ENCODE measurements at regions of chr20 and their contacts with region 1.

Region 1: DNA sequence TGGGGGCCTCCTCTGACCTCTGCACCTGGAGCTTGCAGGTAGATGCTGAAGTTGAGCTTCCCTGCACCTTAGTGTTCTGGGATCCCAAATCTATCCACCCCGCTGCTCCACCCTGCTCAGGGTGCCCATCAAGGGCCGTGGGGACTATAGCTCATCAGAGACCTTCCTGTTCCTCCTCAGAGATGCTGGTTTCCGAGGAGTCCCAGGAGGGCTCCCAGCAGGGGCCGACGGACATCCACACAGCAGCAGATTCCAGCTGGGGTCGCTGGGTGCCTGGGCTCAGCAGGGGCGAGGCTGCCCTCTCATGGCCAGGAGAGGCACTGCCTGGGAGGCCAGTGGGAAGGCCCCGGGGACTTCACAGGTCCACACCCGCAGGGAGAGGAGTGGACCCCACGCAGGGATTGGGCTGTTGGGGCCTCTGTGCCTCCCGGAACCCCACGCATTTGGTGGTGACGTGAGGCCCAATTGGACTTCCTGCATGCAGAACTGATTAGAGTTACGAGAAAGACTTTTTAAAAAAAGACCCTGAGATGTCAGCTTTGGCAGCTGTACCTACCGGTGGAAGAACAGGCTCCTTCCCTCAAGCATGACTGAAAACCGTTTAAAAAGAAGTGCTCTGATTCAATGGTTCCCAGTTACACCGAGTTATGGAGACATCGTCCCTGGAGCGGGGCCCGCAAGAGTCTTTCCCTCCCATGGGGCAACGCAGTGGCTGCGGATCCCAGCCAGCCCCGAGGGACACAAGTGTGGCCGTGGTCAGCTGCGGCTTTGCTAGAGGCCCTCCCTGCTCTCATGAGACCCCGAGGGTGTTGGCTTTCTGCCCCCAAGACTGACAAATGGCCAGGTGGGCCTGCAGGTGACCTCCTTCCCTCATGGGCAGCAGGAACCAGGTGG is 25.3 kb upstream of the SLCO4A1 start:
- DNase-seq: peak; percentile 87
- H3K27ac ChIP-seq: peak overlapping the region; percentile 71
- CTCF ChIP-seq: peak; percentile 100

Region 2: GRCh38 chr20:62409931-62410745 is 206.8 kb before region 1 on chr20:
- CTCF ChIA-PET with region 1: interaction called, 14 read pairs
- POLR2A ChIA-PET with region 1: interaction called, 3 read pairs
- DNase-seq: peak; percentile 66
- H3K27ac ChIP-seq: peak overlapping the region; percentile 21
- CTCF ChIP-seq: peak; percentile 78

Region 3: GRCh38 chr20:62508603-62509051 is 108.3 kb before region 1 on chr20:
- CTCF ChIA-PET with region 1: interaction called, 24 read pairs
- POLR2A ChIA-PET with region 1: no interaction called
- DNase-seq: peak; percentile 84
- H3K27ac ChIP-seq: no peak overlapping the region
- CTCF ChIP-seq: no peak

Region 4: DNA sequence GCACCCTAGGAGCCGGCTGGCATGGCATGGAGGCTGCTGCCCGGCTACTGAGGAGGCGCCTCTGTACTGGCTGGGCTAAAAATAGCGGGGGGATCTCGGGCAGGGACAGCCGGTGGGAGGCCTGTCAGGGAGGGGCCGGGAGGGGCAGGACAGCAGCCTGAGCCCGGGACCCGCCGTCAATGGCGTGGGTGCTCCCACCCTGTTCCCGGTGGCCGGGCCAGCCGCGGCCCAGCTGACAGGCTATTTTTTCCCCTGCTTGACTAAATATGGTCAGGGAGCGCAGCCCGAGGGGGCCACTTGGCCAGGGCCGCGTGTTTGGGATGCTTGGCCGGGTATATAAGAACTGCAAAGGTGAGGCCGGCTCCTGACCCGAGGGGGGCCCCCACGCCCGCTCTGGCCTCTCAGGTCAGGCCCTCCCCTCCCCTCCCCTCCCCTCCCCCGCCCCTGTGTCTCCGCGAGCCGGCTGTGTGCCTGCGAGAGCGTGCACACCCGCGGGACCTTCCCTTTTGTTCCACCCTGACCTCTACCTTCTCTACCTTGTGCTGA is 66.8 kb before region 1 on chr20:
- CTCF ChIA-PET with region 1: interaction called, 12 read pairs
- POLR2A ChIA-PET with region 1: no interaction called
- DNase-seq: no peak
- H3K27ac ChIP-seq: no peak overlapping the region
- CTCF ChIP-seq: no peak

Region 5: DNA sequence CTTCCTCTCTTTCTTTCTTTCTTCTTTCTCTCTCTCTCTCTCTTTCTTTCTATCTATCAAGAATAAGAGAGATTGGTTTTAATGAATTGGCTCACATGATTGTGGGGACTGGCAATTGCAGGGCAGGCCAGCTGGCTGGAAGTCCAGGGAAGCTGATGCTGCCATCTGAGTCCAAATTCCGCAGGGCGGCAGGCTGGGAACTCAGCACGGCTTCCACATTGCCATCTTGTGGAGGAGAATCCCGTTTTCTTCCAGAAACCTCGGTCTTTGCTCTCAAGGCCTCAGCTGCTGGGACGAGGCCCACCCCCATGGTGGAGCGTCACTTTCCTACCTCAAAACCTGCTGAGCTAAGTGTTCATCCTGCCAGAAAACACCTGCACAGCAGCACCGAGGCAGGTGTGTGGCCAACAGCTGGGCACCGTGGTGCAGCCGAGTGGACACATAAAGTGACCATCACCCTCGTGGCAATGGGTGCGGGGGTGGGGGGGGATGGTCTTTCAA is 33.5 kb before region 1 on chr20:
- CTCF ChIA-PET with region 1: interaction called, 18 read pairs
- POLR2A ChIA-PET with region 1: no interaction called
- DNase-seq: no peak
- H3K27ac ChIP-seq: no peak overlapping the region
- CTCF ChIP-seq: no peak

Region 6: GRCh38 chr20:62603021-62603906 is 13.7 kb before region 1 on chr20:
- CTCF ChIA-PET with region 1: interaction called, 44 read pairs
- POLR2A ChIA-PET with region 1: no interaction called
- DNase-seq: peak; percentile 65
- H3K27ac ChIP-seq: peak overlapping the region; percentile 90
- CTCF ChIP-seq: no peak

Region 7: GRCh38 chr20:62656197-62656918 is 39.4 kb after region 1 on chr20:
- CTCF ChIA-PET with region 1: interaction called, 10 read pairs
- POLR2A ChIA-PET with region 1: no interaction called
- DNase-seq: peak; percentile 91
- H3K27ac ChIP-seq: peak overlapping the region; percentile 84
- CTCF ChIP-seq: no peak

Region 8: GRCh38 chr20:63265891-63266515 is 649.0 kb after region 1 on chr20:
- CTCF ChIA-PET with region 1: no interaction called
- POLR2A ChIA-PET with region 1: no interaction called
- DNase-seq: no peak
- H3K27ac ChIP-seq: no peak overlapping the region
- CTCF ChIP-seq: no peak